ENCODE measurements at regions of chr2 and their contacts with region 1.

Region 1: DNA sequence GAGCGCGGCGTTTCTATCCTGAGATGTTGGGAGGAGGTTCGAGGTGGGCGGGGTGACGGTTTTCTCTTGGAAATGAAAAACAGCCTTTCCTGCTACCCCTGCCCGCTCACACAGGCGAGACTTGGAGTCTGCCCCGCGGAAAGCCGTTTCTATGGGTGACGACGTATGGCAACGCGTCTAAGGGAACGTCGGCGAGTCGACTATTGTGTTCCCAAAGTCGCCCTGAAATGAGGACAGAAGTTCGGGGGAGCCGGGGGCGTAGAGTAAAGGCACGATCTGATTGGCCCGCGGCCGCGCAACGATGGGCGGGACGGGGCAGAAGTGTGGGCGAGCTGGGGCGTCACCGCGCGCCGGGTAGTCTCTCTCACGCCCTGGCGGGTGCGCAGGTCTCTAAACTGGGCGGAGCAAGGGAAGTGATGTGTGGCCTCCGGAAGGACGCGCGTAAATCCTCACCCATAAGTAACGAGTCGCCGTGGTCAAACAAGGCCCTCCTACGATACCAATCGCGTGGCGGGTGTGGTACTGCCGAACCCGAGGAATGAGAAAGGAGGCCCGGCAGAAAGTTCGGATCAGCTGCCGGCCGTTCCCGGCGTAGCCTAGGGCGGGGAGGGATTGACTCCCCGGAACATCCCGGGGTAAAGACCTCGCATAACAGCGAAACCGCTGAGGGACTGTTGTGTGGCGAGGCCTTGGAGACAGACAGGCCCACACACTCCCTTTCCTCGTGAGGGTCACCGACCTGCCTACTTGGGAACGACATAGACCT is 89.6 kb downstream of the FAM161A start:
- DNase-seq: peak; percentile 98
- ATAC-seq: peak; percentile 98
- H3K4me3 ChIP-seq: peak overlapping the region; percentile 89 to 94 (median 92)
- H3K4me3 Mint-ChIP-seq: peak overlapping the region; percentile 90
- H3K27ac ChIP-seq: peak overlapping the region; percentile 96 to 98
- H3K27ac Mint-ChIP-seq: peak overlapping the region; percentile 96
- H3K4me1 ChIP-seq: peaks cover 4 to 10% of the 10 kb centered on the region in 2 donors
- H3K4me1 Mint-ChIP-seq: peaks cover 14% of the 10 kb centered on the region
- H3K27me3 ChIP-seq: no peaks in the 10 kb centered on the region
- H3K27me3 Mint-ChIP-seq: peaks cover 2% of the 10 kb centered on the region
- CTCF ChIP-seq: no peak

Region 2: GRCh38 chr2:61470965-61471904 is 293.0 kb before region 1 on chr2 and contains the start of gene USP34:
- CTCF ChIA-PET with region 1: no interaction called
- POLR2A ChIA-PET with region 1: no interaction called
- intact Hi-C with region 1: loop called (anchors 5 kb)
- DNase-seq: peak; percentile 96
- ATAC-seq: peak; percentile 79
- H3K4me3 ChIP-seq: peak within 1 kb of the TSS; percentile 69 to 95 (median 85)
- H3K4me3 Mint-ChIP-seq: peak within 1 kb of the TSS; percentile 93
- H3K27ac ChIP-seq: peak within 1 kb of the TSS; percentile 96 to 99
- H3K27ac Mint-ChIP-seq: peak within 1 kb of the TSS; percentile 96
- H3K4me1 ChIP-seq: peaks cover 24% of the 10 kb centered on the region in 2 donors
- H3K4me1 Mint-ChIP-seq: peaks cover 29% of the 10 kb centered on the region
- H3K27me3 ChIP-seq: no peaks in the 10 kb centered on the region
- H3K27me3 Mint-ChIP-seq: no peaks in the 10 kb centered on the region
- CTCF ChIP-seq: no peak
- total RNA-seq, gene USP34: 311 and 320 TPM in 2 replicates

Region 3: DNA sequence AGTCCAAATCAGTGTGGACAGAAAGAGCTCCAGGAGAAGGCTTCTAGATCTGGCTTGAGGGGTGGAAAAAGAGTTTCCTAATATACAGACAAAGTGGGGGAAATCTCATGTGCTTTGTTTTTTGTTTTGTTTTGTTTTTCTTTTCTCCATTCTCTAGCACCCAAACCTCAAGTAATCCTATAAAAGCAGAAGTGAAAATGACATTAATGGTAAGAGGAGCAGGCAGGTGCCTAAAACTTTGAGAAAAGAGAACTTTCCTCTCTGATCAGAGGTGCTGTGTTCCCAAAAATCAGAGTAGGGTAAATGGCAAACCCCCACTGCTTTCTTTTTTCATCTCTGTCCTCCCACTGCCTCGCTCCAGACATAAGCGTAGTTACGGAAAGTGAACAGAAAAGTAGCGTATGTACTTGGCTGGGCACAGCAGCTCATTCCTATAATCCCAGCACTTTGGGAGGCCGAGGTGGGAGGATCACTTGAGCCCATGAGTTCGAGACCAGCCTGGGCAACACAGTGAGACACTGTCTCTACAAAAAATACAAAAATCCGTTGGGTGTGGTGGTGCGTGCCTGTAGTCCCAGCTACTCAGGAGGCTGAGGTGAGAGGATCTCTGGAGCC is 11.8 kb after region 1 on chr2:
- CTCF ChIA-PET with region 1: interaction called, 5 read pairs
- POLR2A ChIA-PET with region 1: interaction called, 3 read pairs
- intact Hi-C with region 1: loop called (anchors 1 kb)
- DNase-seq: peak; percentile 71
- ATAC-seq: peak; percentile 81
- H3K4me3 ChIP-seq: peak overlapping the region in 2 of 5 experiments; percentile 21 to 43
- H3K4me3 Mint-ChIP-seq: peak overlapping the region; percentile 61
- H3K27ac ChIP-seq: peak overlapping the region; percentile 65 to 71
- H3K27ac Mint-ChIP-seq: peak overlapping the region; percentile 90
- H3K4me1 ChIP-seq: peaks cover 18 to 21% of the 10 kb centered on the region in 2 donors
- H3K4me1 Mint-ChIP-seq: peaks cover 21% of the 10 kb centered on the region
- H3K27me3 ChIP-seq: no peaks in the 10 kb centered on the region
- H3K27me3 Mint-ChIP-seq: peaks cover 13% of the 10 kb centered on the region
- CTCF ChIP-seq: no peak

Region 4: DNA sequence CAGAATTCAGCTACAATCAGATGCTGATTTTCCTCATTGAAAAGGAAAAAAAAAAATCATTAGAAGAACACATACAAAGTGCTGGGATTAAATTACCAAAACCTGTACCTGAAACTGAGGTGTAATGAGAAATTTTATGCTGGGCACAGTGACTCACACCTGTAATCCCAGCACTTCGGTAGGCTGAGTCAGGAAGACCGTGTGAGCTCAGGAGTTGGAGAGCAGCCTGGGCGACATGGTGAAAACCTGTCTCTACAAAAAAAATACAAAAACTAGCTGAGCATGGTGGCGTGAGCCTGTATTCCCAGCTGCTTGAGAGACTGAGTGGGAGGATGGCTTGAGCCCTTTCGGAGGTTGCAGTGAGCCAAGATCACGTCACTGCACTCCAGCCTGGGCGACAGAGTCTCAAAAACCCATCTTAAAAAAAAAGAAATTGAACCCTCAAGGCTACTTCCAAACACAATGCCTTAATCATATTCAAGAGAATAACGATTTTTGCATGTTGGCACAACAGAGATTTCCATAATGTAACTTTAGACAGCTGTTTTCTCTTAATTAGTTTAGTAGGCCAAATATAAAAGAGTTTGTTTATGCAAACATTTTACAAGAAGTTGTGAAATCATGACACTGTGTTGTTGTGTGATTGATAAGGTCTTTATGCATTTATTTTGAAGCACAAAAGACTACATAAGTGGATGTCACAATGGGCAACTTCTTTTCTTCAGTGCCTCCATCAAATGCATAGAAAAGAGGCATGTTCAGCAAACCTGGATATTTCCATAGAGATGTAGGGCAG is 25.8 kb after region 1 on chr2:
- CTCF ChIA-PET with region 1: interaction called, 4 read pairs
- POLR2A ChIA-PET with region 1: no interaction called
- intact Hi-C with region 1: loop called (anchors 1 kb)
- DNase-seq: no peak
- ATAC-seq: no peak
- H3K4me3 ChIP-seq: no peak overlapping the region
- H3K4me3 Mint-ChIP-seq: no peak overlapping the region
- H3K27ac ChIP-seq: no peak overlapping the region
- H3K27ac Mint-ChIP-seq: no peak overlapping the region
- H3K4me1 ChIP-seq: peaks cover 0 to 4% of the 10 kb centered on the region in 2 donors
- H3K4me1 Mint-ChIP-seq: peaks cover 4% of the 10 kb centered on the region
- H3K27me3 ChIP-seq: peaks cover 0 to 4% (median 0%) of the 10 kb centered on the region in 4 experiments
- H3K27me3 Mint-ChIP-seq: peaks cover 4% of the 10 kb centered on the region
- CTCF ChIP-seq: no peak

Region 5: DNA sequence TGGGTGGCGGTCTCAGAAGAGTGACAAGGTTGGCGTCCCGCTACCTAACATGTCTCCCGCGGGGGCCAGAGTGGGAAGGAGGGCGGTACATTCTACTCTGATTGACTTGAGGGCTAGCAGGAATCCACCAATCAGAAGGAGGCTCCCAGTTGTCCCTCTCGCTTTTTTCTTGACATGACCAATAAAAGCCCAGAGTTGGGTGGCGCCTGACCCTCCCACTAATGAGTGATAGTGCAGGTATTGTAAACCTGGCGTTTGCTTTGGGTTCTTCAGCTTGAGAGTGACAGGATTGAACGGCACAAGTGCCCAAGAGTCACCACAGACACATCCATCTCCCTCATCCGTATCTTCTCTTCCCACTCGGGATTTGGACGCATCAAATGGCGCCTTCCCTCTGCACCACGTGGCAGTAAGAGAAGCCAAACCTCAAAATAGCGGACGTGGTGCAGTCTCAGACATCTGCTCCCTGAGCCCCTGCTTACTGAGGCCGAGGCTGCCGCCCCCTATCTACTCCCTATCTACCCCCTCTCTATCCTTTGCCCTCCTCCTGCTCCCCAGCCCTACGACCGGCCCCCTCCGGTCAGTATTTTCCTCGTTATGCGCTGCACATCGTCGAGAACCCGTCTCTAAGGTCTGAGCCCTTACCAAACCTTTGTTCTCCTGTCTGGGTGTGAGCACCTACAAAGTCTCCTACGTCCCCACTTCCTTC is 90.4 kb after region 1 on chr2:
- CTCF ChIA-PET with region 1: no interaction called
- POLR2A ChIA-PET with region 1: interaction called, 7 read pairs
- intact Hi-C with region 1: loop called (anchors 1 kb)
- DNase-seq: peak; percentile 96
- ATAC-seq: peak; percentile 83
- H3K4me3 ChIP-seq: peak overlapping the region; percentile 92 to 99 (median 98)
- H3K4me3 Mint-ChIP-seq: peak overlapping the region; percentile 94
- H3K27ac ChIP-seq: peak overlapping the region; percentile 56 to 68
- H3K27ac Mint-ChIP-seq: peak overlapping the region; percentile 92
- H3K4me1 ChIP-seq: peaks cover 11 to 16% of the 10 kb centered on the region in 2 donors
- H3K4me1 Mint-ChIP-seq: peaks cover 23% of the 10 kb centered on the region
- H3K27me3 ChIP-seq: no peaks in the 10 kb centered on the region
- H3K27me3 Mint-ChIP-seq: no peaks in the 10 kb centered on the region
- CTCF ChIP-seq: no peak

Region 6: DNA sequence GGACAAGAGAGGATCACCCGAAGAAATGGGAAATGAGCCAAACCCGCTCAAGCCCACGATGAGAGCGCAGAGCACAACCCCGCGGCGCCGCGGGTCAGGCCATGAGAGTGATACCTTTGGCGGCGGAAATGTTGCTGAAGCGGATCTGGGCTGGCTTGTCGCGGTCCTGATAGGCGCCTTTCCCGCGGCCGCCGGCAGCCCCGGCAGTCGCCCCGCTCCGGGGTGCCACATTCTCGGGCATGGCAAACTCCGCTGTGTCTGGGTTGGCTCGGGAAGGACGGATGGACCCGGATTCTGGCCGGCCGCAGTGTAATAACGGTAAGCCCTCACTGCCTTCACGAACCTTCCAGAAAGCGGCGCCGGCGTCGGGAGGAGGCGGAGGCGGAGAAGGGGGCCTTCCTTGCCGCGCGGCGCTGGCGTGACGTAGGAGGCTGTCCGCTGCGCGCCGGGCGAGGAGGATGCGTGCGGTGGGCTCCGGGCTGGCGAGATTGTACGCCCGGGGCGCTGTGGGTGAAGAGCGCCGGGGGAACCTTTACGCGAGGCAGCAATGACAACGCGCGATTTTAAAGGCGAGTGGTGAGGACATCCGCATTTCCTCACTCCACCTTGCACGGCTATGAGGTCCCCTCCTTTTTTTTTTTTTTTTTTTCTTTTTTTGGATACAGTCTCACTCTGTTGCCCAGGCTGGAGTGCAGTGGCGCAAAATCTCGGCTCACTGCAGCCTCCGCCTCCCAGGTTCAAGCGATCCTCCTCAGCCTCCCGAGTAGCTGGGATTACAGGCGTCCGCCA is 124.2 kb after region 1 on chr2 and contains the start of gene CCT4:
- CTCF ChIA-PET with region 1: no interaction called
- POLR2A ChIA-PET with region 1: no interaction called
- intact Hi-C with region 1: loop called (anchors 1 kb)
- DNase-seq: peak; percentile 98
- ATAC-seq: peak; percentile 85
- H3K4me3 ChIP-seq: peak within 1 kb of the TSS; percentile 79 to 92 (median 89)
- H3K4me3 Mint-ChIP-seq: peak within 1 kb of the TSS; percentile 100
- H3K27ac ChIP-seq: peak within 1 kb of the TSS; percentile 95 to 96
- H3K27ac Mint-ChIP-seq: peak within 1 kb of the TSS; percentile 100
- H3K4me1 ChIP-seq: peaks cover 11 to 25% of the 10 kb centered on the region in 2 donors
- H3K4me1 Mint-ChIP-seq: peaks cover 32% of the 10 kb centered on the region
- H3K27me3 ChIP-seq: no peaks in the 10 kb centered on the region
- H3K27me3 Mint-ChIP-seq: no peaks in the 10 kb centered on the region
- CTCF ChIP-seq: no peak
- total RNA-seq, gene CCT4: 86.4 and 88.0 TPM in 2 replicates

Region 7: DNA sequence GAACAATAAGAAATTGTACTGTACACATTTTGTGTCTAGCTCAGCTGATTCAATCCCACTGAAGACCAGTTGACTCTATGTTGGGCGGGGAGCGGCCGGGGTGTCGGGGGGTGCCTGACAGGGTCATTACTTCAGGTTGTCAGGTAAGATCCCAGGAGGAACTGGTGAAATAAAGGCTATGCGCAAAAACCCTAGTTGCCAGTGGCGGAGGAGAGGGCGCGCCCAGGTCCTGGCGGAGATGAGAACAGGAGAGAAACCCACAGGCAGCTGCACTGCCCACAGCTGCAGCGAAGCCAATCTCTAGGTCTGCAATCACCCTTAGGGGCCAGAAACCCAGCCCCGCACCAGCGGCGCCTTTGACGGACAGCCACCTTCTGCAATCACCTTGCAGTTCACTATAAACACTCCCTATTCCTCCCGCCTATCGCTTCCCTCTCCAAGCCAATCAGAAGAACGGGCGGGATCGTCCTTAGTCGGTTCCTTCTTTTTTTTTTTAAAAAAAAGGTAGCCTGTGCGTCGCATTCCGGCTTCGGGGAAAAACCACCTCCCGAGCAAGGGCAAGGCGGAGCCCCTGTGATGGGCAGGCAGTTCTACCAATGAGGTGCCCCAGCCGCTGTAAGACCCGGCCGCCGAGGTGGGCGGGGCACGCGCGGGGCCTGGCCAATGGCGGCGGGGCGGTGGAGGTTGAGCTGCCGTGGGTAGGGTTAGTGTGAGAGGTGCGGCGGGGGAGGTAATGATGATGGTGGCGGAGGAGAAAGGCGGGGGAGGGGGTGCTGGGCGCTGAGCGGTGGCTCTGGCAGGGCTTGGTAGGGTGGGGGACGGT is 941.0 kb after region 1 on chr2 and contains the start of gene EHBP1:
- CTCF ChIA-PET with region 1: no interaction called
- POLR2A ChIA-PET with region 1: no interaction called
- intact Hi-C with region 1: loop called (anchors 10 kb)
- DNase-seq: peak; percentile 98
- ATAC-seq: peak; percentile 93
- H3K4me3 ChIP-seq: peak within 1 kb of the TSS; percentile 67 to 85 (median 74)
- H3K4me3 Mint-ChIP-seq: peak within 1 kb of the TSS; percentile 93
- H3K27ac ChIP-seq: peak within 1 kb of the TSS; percentile 35 to 47
- H3K27ac Mint-ChIP-seq: peak within 1 kb of the TSS; percentile 80
- H3K4me1 ChIP-seq: peaks cover 20 to 21% of the 10 kb centered on the region in 2 donors
- H3K4me1 Mint-ChIP-seq: peaks cover 33% of the 10 kb centered on the region
- H3K27me3 ChIP-seq: no peaks in the 10 kb centered on the region
- H3K27me3 Mint-ChIP-seq: no peaks in the 10 kb centered on the region
- CTCF ChIP-seq: no peak
- total RNA-seq, gene EHBP1: 34.7 and 36.3 TPM in 2 replicates

Region 8: DNA sequence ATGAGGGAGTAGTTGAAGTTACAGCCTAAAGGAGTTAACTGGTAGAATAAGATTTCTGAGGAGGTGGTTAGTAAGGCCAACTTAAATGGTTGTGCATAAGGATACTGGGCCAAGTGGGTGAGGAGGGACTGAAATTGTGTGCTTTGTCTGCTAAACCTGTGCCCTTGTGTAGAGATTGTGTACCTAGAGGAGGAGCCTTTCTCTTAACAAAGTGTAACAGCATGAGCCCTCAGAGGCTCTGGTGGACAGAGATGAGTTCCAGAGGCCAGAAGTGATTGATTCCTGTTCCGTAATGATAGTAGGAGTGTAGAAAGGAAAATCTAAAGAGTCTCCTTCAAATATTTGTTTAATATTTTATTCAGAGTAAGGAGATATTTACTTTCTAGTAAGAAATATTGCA is 1329.3 kb after region 1 on chr2:
- CTCF ChIA-PET with region 1: no interaction called
- POLR2A ChIA-PET with region 1: no interaction called
- intact Hi-C with region 1: no loop called
- DNase-seq: no peak
- ATAC-seq: no peak
- H3K4me3 ChIP-seq: no peak overlapping the region
- H3K4me3 Mint-ChIP-seq: no peak overlapping the region
- H3K27ac ChIP-seq: no peak overlapping the region
- H3K27ac Mint-ChIP-seq: no peak overlapping the region
- H3K4me1 ChIP-seq: no peaks in the 10 kb centered on the region
- H3K4me1 Mint-ChIP-seq: no peaks in the 10 kb centered on the region
- H3K27me3 ChIP-seq: peaks cover 0 to 3% (median 1%) of the 10 kb centered on the region in 4 experiments
- H3K27me3 Mint-ChIP-seq: peaks cover 11% of the 10 kb centered on the region
- CTCF ChIP-seq: no peak